ENCODE measurements at regions of chrX and their contacts with region 1.

Region 1: GRCh38 chrX:38664285-38664684 is 102.9 kb downstream of the TSPAN7 start:
- DNase-seq: peak in 1 of 2 experiments; percentile 13
- H3K4me3 ChIP-seq: no peak overlapping the region
- H3K4me3 Mint-ChIP-seq: no peak overlapping the region
- H3K27ac Mint-ChIP-seq: no peak overlapping the region
- H3K4me1 ChIP-seq: no peaks in the 10 kb centered on the region
- H3K4me1 Mint-ChIP-seq: no peaks in the 10 kb centered on the region
- H3K27me3 ChIP-seq: no peaks in the 10 kb centered on the region
- H3K27me3 Mint-ChIP-seq: no peaks in the 10 kb centered on the region
- CTCF ChIP-seq: peak; percentile 25 to 34

Region 2: GRCh38 chrX:38754102-38754790 is 90.0 kb after region 1 on chrX:
- CTCF ChIA-PET with region 1: no interaction called
- POLR2A ChIA-PET with region 1: no interaction called
- intact Hi-C with region 1: loop called (anchors 10 kb)
- DNase-seq: peak in 1 of 2 experiments; percentile 35
- H3K4me3 ChIP-seq: no peak overlapping the region
- H3K4me3 Mint-ChIP-seq: no peak overlapping the region
- H3K27ac Mint-ChIP-seq: no peak overlapping the region
- H3K4me1 ChIP-seq: no peaks in the 10 kb centered on the region
- H3K4me1 Mint-ChIP-seq: no peaks in the 10 kb centered on the region
- H3K27me3 ChIP-seq: no peaks in the 10 kb centered on the region
- H3K27me3 Mint-ChIP-seq: peaks cover 6% of the 10 kb centered on the region
- CTCF ChIP-seq: peak; percentile 50 to 56

Region 3: GRCh38 chrX:39112143-39112542 is 447.9 kb after region 1 on chrX:
- CTCF ChIA-PET with region 1: no interaction called
- POLR2A ChIA-PET with region 1: no interaction called
- intact Hi-C with region 1: no loop called
- DNase-seq: no peak
- H3K4me3 ChIP-seq: no peak overlapping the region
- H3K4me3 Mint-ChIP-seq: no peak overlapping the region
- H3K27ac Mint-ChIP-seq: no peak overlapping the region
- H3K4me1 ChIP-seq: no peaks in the 10 kb centered on the region
- H3K4me1 Mint-ChIP-seq: no peaks in the 10 kb centered on the region
- H3K27me3 ChIP-seq: no peaks in the 10 kb centered on the region
- H3K27me3 Mint-ChIP-seq: peaks cover 4% of the 10 kb centered on the region
- CTCF ChIP-seq: no peak